H1 (cell line): ENCODE measurements at regions of chr1 and their contacts with region 1.

Region 1: DNA sequence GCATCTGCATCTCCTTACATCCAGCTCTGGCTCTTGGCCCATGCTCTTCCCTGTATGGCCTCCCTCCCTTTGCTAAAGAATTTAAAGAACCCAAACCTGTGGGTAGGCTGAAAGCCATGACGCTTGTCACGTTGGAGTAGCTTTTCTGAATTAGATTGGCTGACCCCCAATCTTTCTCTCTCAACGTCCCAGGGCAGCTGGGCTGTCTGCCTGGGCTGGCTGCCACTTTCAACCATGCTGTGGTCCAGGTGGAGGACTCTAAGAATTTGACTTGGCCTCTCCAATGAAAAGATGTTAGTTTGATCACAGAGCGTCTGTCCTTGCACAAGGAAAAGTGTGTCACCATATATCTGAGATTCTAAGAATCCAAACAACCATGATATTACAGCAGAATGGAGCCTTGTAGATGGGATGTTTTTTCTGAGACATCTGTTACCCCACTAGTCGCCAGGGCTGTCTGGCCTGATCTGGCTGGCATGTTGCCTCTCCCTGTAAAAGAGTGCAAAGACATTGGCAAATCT is 6.5 kb upstream of the IGSF3 start:
- DNase-seq: no peak
- H3K4me3 ChIP-seq: no peak overlapping the region
- H3K27ac ChIP-seq: no peak overlapping the region
- H3K4me1 ChIP-seq: no peaks in the 10 kb centered on the region
- H3K27me3 ChIP-seq: no peaks in the 10 kb centered on the region; a peak in 1 of 7 replicates
- CTCF ChIP-seq: no peak
- EP300 ChIP-seq: no peak
- POLR2A ChIP-seq: no peak
- RAD21 ChIP-seq: no peak

Region 2: DNA sequence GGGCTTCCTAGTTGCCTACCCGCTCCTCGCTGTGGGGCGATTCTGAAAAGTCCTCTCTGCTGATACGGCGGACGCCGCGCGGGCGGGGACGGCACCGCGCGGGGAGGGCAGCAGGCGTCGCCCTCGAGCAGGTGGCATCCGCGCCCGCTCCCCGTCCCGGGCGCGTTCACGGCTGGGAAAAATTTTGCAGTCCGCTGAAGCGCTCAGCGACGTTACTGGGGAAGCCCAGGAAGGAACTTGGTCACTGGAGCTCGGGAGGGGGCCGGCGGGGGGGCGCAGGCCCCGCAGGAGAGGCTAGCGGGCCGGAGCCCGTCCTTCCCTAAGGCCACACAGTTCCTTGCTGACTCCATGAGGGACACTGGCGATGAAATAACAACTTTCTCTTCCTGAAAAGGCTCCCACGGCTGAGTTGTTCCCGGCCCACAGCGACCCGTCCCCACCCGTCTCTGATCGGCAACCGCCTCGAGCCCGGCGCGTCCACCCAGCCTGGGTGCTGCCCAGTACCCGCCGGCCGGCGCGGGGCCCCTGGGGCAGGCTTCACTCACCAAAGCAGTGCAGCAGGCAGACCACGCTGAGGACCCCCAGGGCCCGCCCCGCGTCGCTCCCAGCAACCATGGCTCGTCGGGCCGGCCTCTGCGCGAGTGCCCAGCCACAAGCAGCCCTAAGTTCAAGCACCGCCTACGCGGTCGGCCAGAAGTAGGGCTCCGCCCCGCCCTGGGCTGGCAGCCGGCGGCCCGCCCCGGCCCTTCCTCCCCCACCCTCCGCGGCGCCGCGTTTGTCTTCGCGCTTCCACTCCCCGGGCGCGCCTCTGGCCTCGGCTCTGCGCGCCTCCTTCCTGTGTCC is 103.5 kb before region 1 on chr1 and contains the start of gene CD58:
- CTCF ChIA-PET with region 1: interaction called, 36 read pairs
- POLR2A ChIA-PET with region 1: no interaction called
- DNase-seq: peak; percentile 65 to 86
- H3K4me3 ChIP-seq: peak within 1 kb of the TSS; percentile 64 to 83 (median 74)
- H3K27ac ChIP-seq: no peak within 1 kb of the TSS
- H3K4me1 ChIP-seq: peaks cover 0 to 19% (median 7%) of the 10 kb centered on the region in 4 experiments; a peak in 5 of 7 replicates
- H3K27me3 ChIP-seq: peaks cover 0 to 4% (median 0%) of the 10 kb centered on the region in 4 experiments; a peak in 1 of 7 replicates
- CTCF ChIP-seq: peak; percentile 66 to 84 (median 67)
- EP300 ChIP-seq: no peak
- POLR2A ChIP-seq: peak; percentile 54 to 68; a peak in 2 of 3 replicates
- RAD21 ChIP-seq: peak in 1 of 2 experiments; percentile 47; a peak in 1 of 4 replicates
- total RNA-seq, gene CD58: 5.5 and 6.0 TPM in 2 replicates

Region 3: DNA sequence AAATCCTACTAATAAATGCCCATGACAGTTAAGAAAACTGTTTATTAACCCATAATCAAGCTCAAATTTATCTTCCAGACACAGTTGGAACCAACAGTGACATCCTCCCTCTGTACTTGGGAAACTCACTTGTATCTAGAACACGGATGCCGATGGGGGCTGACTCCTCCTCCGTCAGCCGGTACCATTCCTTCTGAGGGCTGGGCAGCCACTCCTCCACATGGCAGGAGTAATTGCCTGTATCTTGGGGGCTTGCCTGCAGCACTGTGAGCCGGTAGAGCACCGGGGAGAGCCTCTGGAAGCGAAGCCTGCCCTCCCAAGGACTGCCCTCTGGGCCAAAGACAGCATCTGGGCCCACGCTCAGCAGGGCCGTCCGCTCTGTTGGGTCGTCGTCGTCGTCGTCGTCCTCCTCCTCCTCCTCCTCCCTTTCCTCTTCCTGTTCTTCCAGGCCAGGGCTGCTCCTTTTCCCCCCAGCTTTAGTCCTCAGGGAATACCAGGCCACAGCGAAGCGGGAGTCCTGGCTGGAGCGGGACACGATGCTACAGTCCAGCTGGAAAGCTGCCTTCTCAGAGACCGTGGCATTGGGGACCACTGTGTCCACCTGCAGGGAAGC is 94.7 kb before region 1 on chr1:
- CTCF ChIA-PET with region 1: interaction called, 36 read pairs
- POLR2A ChIA-PET with region 1: no interaction called
- DNase-seq: no peak
- H3K4me3 ChIP-seq: no peak overlapping the region
- H3K27ac ChIP-seq: no peak overlapping the region
- H3K4me1 ChIP-seq: no peaks in the 10 kb centered on the region
- H3K27me3 ChIP-seq: no peaks in the 10 kb centered on the region
- CTCF ChIP-seq: no peak
- EP300 ChIP-seq: no peak
- POLR2A ChIP-seq: no peak
- RAD21 ChIP-seq: no peak

Region 4: DNA sequence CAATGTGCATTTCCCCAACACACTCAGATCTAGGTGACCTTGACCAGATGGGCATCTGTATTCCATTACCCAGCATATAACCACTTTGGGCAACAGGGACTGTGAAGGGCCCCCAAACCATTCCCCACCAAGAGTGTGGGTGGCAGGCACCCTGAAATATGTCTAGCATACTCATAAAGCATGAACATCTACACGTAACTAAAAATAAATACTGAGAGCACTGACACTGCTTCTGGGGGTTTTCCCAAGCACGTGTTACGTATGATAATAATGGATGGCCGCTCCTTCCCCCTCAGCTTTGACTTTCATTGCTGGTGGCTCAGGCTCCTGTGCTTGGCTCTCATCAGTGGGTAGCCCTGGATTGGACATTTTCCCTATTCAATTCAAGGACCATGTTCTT is 45.6 kb before region 1 on chr1:
- CTCF ChIA-PET with region 1: interaction called, 11 read pairs
- POLR2A ChIA-PET with region 1: no interaction called
- DNase-seq: no peak
- H3K4me3 ChIP-seq: no peak overlapping the region
- H3K27ac ChIP-seq: no peak overlapping the region
- H3K4me1 ChIP-seq: peaks cover 6 to 19% (median 11%) of the 10 kb centered on the region in 4 experiments; a peak in 6 of 7 replicates
- H3K27me3 ChIP-seq: no peaks in the 10 kb centered on the region
- CTCF ChIP-seq: no peak
- EP300 ChIP-seq: no peak
- POLR2A ChIP-seq: no peak
- RAD21 ChIP-seq: no peak

Region 5: DNA sequence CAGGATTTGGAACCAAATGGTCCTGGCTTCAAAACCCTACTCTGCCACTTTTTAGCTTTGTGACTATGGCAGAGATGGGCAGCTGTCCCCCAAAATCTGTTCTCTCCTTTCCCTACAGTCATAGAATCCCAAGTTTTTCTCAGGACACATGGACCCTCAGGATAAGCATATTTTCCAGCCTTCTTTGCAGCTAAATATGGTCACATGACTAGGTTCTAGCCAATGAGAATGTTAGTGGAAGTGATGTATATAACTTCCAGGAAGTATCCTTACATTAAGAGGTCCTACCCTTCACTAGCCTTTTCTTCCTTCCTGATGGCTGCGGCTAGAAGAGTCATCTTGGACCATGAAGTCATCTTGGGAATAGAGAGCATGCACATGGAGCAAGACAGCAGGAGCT is 12.4 kb before region 1 on chr1:
- CTCF ChIA-PET with region 1: interaction called, 16 read pairs
- POLR2A ChIA-PET with region 1: no interaction called
- DNase-seq: no peak
- H3K4me3 ChIP-seq: no peak overlapping the region
- H3K27ac ChIP-seq: no peak overlapping the region
- H3K4me1 ChIP-seq: peaks cover 7 to 15% (median 12%) of the 10 kb centered on the region in 4 experiments; a peak in 5 of 7 replicates
- H3K27me3 ChIP-seq: peaks cover 0 to 3% (median 0%) of the 10 kb centered on the region in 4 experiments; a peak in 2 of 7 replicates
- CTCF ChIP-seq: no peak
- EP300 ChIP-seq: no peak
- POLR2A ChIP-seq: no peak
- RAD21 ChIP-seq: no peak

Region 6: GRCh38 chr1:116686175-116686574 is 12.1 kb after region 1 on chr1:
- CTCF ChIA-PET with region 1: interaction called, 14 read pairs
- POLR2A ChIA-PET with region 1: no interaction called
- DNase-seq: no peak
- H3K4me3 ChIP-seq: no peak overlapping the region
- H3K27ac ChIP-seq: no peak overlapping the region
- H3K4me1 ChIP-seq: peaks cover 0 to 2% (median 0%) of the 10 kb centered on the region in 4 experiments; a peak in 1 of 7 replicates
- H3K27me3 ChIP-seq: no peaks in the 10 kb centered on the region
- CTCF ChIP-seq: no peak
- EP300 ChIP-seq: no peak
- POLR2A ChIP-seq: no peak
- RAD21 ChIP-seq: no peak

Region 7: GRCh38 chr1:116826818-116827606 is 152.9 kb after region 1 on chr1:
- CTCF ChIA-PET with region 1: no interaction called
- POLR2A ChIA-PET with region 1: no interaction called
- DNase-seq: no peak
- H3K4me3 ChIP-seq: no peak overlapping the region
- H3K27ac ChIP-seq: no peak overlapping the region
- H3K4me1 ChIP-seq: peaks cover 0 to 11% (median 8%) of the 10 kb centered on the region in 4 experiments; a peak in 5 of 7 replicates
- H3K27me3 ChIP-seq: no peaks in the 10 kb centered on the region
- CTCF ChIP-seq: no peak
- EP300 ChIP-seq: no peak
- POLR2A ChIP-seq: no peak
- RAD21 ChIP-seq: no peak